Left cardiac atrium (tissue), 4 donors: ENCODE measurements at regions of chr16 and their contacts with region 1.

Region 1: GRCh38 chr16:60203525-60204124 is 1469.5 kb upstream of the GOT2 start:
- DNase-seq: no peak
- ATAC-seq: no peak

Region 2: DNA sequence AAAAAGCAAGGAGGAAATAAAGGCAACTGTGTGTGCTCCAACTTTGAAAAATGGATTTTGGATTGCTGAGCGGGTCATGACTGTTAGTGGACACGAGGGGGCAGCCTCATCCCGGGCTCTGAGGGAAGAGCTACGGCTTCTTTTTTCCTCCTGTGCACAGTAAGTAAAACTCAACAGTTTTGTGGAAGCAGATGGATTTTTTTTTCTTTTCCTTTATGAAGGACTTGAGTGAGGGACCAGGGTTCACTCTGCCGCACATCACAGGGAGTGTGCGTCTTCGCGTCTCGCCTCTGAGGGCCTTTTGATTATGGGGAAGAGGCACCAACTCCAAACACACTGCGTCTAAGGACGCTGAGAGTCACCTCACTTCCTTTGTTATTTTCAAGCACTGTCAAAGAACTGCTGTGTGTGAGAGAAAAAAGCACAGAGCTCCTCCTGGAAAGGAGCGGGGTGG is 1389.2 kb before region 1 on chr16:
- intact Hi-C with region 1: loop called in 1 of 2 experiments (anchors 2 kb)
- DNase-seq: peak; percentile 46
- ATAC-seq: peak; percentile 68 to 79

Region 3: DNA sequence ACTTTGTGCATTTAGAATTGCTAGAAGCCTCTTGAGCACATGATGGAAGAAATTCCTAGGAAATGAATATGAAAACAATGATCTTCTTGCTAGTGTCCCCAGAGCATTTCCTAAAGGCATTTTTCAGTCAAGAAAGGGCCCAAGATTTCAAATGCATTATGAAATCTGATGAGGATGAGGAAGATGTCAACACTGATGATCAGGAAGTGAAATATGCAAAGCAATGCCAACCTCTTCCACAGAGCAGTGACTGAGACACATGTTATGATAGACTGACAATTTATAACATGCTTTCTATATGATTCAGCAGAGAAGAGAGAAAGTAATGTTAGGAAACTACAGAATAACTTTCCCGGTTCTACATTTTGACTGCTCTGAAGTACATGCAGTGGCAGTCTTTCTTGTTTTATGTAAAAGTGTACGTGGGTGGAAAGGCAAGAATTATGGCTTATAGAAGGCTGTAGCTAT is 610.4 kb before region 1 on chr16:
- intact Hi-C with region 1: no loop called
- DNase-seq: no peak
- ATAC-seq: no peak